Sigmoid colon (tissue), 7 donors: ENCODE measurements at regions of chr18 and their contacts with region 1.

Region 1: GRCh38 chr18:68623342-68623741 is 91.6 kb downstream of the TMX3 start:
- DNase-seq: peak; percentile 66
- H3K4me3 ChIP-seq: no peak overlapping the region
- H3K27ac ChIP-seq: no peak overlapping the region
- H3K4me1 ChIP-seq: no peaks in the 10 kb centered on the region
- H3K27me3 ChIP-seq: no peaks in the 10 kb centered on the region
- CTCF ChIP-seq: peak in 3 of 4 experiments; percentile 36 to 66 (median 53)
- EP300 ChIP-seq: no peak
- POLR2A ChIP-seq: no peak

Region 2: GRCh38 chr18:67515945-67516538 is 1107.3 kb before region 1 on chr18:
- intact Hi-C with region 1: loop called (anchors 5 kb)
- DNase-seq: peak; percentile 94
- H3K4me3 ChIP-seq: peak overlapping the region; percentile 63 to 81 (median 74)
- H3K27ac ChIP-seq: peak overlapping the region; percentile 81 to 93 (median 92)
- H3K4me1 ChIP-seq: peaks cover 0 to 47% (median 30%) of the 10 kb centered on the region in 4 donors
- H3K27me3 ChIP-seq: no peaks in the 10 kb centered on the region
- CTCF ChIP-seq: peak; percentile 51 to 76 (median 62)
- EP300 ChIP-seq: no peak
- POLR2A ChIP-seq: no peak

Region 3: GRCh38 chr18:68817584-68817983 is 194.2 kb after region 1 on chr18:
- intact Hi-C with region 1: no loop called
- DNase-seq: no peak
- H3K4me3 ChIP-seq: no peak overlapping the region
- H3K27ac ChIP-seq: no peak overlapping the region
- H3K4me1 ChIP-seq: no peaks in the 10 kb centered on the region
- H3K27me3 ChIP-seq: no peaks in the 10 kb centered on the region
- CTCF ChIP-seq: no peak
- EP300 ChIP-seq: no peak
- POLR2A ChIP-seq: no peak